H1 (cell line): ENCODE measurements at regions of chr7 and their contacts with region 1.

Region 1: DNA sequence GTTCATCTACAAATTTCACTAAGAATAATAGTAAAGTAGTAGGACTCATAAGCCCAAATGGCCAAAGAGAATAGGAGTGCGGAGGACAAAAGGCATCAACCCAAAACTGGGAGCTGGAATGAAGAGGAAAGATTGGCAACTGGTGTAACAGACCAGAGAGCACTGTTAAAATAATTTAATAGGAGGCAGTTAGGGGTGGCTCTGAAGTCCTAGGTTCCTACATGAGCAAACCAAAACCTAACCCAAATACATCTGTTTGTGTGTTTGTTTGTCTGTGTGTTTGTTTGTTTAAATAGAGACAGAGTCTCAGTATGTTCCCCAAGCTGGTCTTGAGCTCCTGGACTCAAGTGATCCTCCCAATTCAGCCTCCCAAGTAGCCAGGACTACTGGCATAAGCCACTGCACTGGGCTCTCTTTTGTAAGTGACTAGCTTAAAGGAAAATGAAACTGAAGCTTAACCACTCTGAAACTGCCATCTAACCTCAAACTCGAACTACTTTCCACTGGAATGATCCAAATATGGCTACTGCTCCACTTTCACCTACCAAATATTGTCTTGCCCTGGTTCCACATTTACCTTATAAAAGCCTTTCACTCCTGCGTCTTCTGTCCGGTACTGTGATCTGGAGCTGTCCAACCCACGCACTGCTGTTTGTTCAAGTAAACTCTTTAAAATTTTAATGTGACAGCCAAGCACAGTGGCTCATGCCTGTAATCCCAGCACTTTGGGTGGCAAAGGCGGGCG is 94.9 kb downstream of the AKR1D1 start:
- DNase-seq: no peak
- H3K4me3 ChIP-seq: peak overlapping the region in 1 of 4 experiments; percentile 41; a peak in 1 of 8 replicates
- H3K27ac ChIP-seq: peak overlapping the region; percentile 84
- H3K4me1 ChIP-seq: peaks cover 9 to 24% (median 22%) of the 10 kb centered on the region in 4 experiments; a peak in 6 of 7 replicates
- H3K27me3 ChIP-seq: no peaks in the 10 kb centered on the region
- CTCF ChIP-seq: no peak
- EP300 ChIP-seq: no peak
- POLR2A ChIP-seq: no peak
- RAD21 ChIP-seq: no peak

Region 2: DNA sequence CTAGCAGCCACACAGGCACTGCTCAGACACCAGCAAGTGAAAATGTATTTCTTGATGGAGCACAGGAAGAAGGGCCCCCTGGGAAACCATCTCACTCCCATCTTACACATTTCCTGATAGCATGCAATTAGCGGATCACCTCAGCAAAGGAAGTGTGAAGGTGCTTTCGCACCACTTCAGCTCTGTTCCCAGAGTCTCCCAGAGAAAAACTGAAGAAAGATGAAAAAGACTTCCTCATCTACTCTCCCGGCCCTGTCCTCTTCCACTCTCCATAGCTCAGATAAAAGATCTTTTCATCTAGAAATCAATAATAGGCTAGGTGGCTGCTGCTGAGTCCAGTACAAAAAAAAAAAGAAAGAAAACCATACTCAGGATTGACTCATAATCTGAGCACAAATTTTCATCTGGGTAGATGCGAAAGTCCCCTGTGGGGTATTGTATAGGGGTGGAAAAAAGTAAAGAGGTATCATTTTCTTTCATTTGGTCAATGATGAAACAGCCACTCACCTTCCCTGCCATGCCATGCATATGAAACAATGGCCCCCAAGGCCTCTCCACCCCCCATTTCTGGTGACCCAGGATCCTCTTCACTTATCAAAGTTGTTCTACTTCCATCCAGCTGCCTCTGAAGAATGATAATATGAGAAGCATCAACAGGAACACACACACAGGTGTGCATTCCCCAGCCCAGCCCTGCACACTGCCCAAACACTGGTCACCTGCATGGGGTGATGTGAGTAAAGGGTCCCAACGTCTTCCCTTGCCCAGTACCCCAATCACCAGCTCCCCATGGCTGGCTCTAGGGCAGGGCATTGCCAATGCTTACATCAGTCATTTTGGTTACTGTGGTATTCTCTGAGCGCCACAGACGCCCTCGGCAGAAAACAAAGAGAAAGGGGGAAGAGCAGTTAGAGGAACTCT is 275.6 kb before region 1 on chr7:
- CTCF ChIA-PET with region 1: no interaction called
- POLR2A ChIA-PET with region 1: no interaction called
- DNase-seq: no peak
- H3K4me3 ChIP-seq: no peak overlapping the region
- H3K27ac ChIP-seq: no peak overlapping the region
- H3K4me1 ChIP-seq: peaks cover 0 to 2% (median 0%) of the 10 kb centered on the region in 4 experiments; a peak in 3 of 7 replicates
- H3K27me3 ChIP-seq: no peaks in the 10 kb centered on the region
- CTCF ChIP-seq: no peak
- EP300 ChIP-seq: no peak
- POLR2A ChIP-seq: no peak
- RAD21 ChIP-seq: no peak

Region 3: GRCh38 chr7:138125598-138126111 is 45.5 kb before region 1 on chr7:
- CTCF ChIA-PET with region 1: no interaction called
- POLR2A ChIA-PET with region 1: no interaction called
- DNase-seq: no peak
- H3K4me3 ChIP-seq: no peak overlapping the region
- H3K27ac ChIP-seq: no peak overlapping the region
- H3K4me1 ChIP-seq: peaks cover 0 to 3% (median 0%) of the 10 kb centered on the region in 4 experiments; a peak in 1 of 7 replicates
- H3K27me3 ChIP-seq: no peaks in the 10 kb centered on the region
- CTCF ChIP-seq: no peak
- EP300 ChIP-seq: no peak
- POLR2A ChIP-seq: no peak
- RAD21 ChIP-seq: no peak

Region 4: GRCh38 chr7:138184191-138184590 is 13.1 kb after region 1 on chr7:
- CTCF ChIA-PET with region 1: interaction called, 4 read pairs
- POLR2A ChIA-PET with region 1: interaction called, 21 read pairs
- DNase-seq: no peak
- H3K4me3 ChIP-seq: no peak overlapping the region
- H3K27ac ChIP-seq: no peak overlapping the region
- H3K4me1 ChIP-seq: no peaks in the 10 kb centered on the region
- H3K27me3 ChIP-seq: no peaks in the 10 kb centered on the region
- CTCF ChIP-seq: no peak
- EP300 ChIP-seq: no peak
- POLR2A ChIP-seq: no peak
- RAD21 ChIP-seq: no peak

Region 5: GRCh38 chr7:138204285-138204981 is 33.3 kb after region 1 on chr7:
- CTCF ChIA-PET with region 1: interaction called, 5 read pairs
- POLR2A ChIA-PET with region 1: interaction called, 26 read pairs
- DNase-seq: no peak
- H3K4me3 ChIP-seq: no peak overlapping the region
- H3K27ac ChIP-seq: peak overlapping the region; percentile 48; the same call in 1 of the 2 replicates
- H3K4me1 ChIP-seq: peaks cover 14 to 39% (median 30%) of the 10 kb centered on the region in 4 experiments
- H3K27me3 ChIP-seq: no peaks in the 10 kb centered on the region; a peak in 2 of 7 replicates
- CTCF ChIP-seq: no peak
- EP300 ChIP-seq: no peak
- POLR2A ChIP-seq: no peak
- RAD21 ChIP-seq: no peak